ENCODE measurements at regions of chr20 and their contacts with region 1.

Region 1: DNA sequence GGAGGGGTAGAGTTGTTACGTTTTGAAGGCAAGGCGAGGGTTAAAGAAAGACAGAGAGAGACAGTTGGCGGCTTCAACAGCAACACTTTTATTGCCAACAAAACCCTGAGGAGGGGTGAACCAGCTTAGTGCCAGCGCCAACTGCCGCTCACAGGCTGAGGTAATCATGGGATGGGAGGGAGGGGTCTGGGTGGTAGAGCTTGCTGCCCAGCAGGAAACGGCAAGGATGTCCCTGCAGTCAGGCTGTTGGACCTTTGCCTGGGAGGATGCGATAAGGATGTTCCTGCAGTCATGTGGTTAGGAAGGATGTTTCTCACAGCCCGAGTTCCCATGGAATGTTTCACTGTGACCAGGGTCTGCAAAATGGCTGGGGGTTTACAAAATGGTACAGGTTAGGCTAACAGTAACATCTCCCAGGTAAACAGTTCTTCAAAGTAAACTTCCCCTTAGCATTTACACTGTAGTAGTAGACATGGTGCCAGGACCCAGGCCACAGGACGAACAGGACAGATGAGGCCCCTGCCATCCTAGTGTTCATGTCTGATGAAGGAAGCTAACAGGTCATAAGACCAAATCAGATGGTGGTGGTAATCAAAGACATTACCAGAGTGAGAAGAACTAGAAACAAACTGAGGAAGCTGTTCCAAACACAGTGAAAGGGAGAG is 647.3 kb upstream of the DEFB115 start:
- DNase-seq: no peak
- H3K4me3 ChIP-seq: no peak overlapping the region
- H3K27ac ChIP-seq: peak overlapping the region in 6 of 59 donors; percentile 7 to 77 (median 69)
- H3K27me3 ChIP-seq: peaks cover 0 to 2% (median 0%) of the 10 kb centered on the region in 45 donors
- CTCF ChIP-seq: no peak

Region 2: DNA sequence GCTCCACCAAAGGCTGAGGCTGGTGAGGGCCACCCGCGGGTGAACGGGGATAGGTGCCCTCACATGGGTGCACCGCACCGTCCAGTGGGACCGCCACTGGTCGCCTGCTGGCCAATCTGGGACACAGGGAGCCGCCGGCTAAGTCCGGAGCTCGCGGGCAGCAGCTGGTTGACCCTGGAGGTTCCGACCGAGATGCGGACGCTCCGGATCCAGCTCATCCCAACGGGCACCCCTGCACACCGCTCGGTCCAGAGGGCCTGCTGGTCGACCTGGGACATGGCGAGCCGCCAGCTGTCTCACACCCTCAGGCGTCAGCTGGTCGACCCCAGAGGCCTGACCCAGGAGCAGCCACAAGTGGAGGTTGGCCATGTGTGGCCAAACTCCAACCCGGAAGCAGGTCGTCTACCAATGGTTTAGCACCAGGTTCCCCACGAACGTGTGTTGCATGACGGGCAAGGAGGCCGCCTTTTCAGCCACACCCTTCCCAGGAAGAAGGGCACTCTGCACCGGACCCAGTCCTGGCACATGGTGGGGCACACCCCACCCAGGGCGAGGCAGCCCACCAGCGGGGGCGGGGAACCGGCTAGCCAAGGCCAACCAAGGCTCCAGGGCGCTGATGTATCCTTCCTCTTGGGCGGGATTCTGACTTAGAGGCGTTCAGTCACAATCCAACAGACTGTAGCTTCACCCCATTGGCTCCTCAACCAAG is 98.7 kb before region 1 on chr20:
- intact Hi-C with region 1: no loop called
- DNase-seq: no peak
- H3K4me3 ChIP-seq: no peak overlapping the region
- H3K27ac ChIP-seq: no peak overlapping the region
- H3K27me3 ChIP-seq: peaks cover 0 to 4% (median 0%) of the 10 kb centered on the region in 45 donors
- CTCF ChIP-seq: no peak

Region 3: GRCh38 chr20:30594112-30594511 is 16.0 kb before region 1 on chr20:
- intact Hi-C with region 1: loop called in 1 of 2 experiments (anchors 2 kb)
- DNase-seq: no peak
- H3K4me3 ChIP-seq: no peak overlapping the region
- H3K27ac ChIP-seq: no peak overlapping the region
- H3K27me3 ChIP-seq: peaks cover 0 to 8% (median 0%) of the 10 kb centered on the region in 45 donors
- CTCF ChIP-seq: no peak

Region 4: GRCh38 chr20:31684153-31685015 is 1074.2 kb after region 1 on chr20:
- intact Hi-C with region 1: no loop called
- DNase-seq: peak in 3 of 10 donors; percentile 17 to 50 (median 31)
- H3K4me3 ChIP-seq: no peak overlapping the region
- H3K27ac ChIP-seq: peak overlapping the region in 56 of 59 donors; percentile 8 to 100 (median 68)
- H3K27me3 ChIP-seq: no peaks in the 10 kb centered on the region
- CTCF ChIP-seq: no peak

Measured in dorsolateral prefrontal cortex (tissue), 120 donors.